ENCODE measurements at regions of chr19 and their contacts with region 1.

Region 1: DNA sequence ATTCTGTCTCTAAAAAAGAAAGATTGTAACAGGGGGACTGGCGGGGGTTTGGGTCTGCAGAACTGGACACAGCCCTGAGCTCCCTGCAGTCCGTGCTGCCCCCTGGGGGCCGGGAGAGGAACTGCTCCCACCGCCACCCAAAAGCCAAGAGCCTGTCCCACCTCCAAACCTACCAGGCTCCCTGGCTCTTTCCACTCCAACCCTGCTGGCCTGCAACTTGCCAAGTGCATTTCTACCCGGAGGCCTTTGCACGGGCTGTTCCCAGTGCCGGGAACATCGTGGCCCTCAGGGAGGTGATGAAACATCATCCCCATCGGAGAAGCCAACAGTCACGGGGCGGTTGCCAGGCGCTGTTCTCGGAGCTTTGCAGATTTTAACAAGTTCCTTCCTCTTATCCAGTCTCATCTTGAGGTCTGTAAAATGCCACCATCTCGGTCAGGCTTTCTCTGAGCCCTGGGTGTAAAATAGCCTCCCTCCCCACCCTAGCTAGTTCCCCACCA is 50.7 kb downstream of the SMIM24 start:
- DNase-seq: peak; percentile 74
- H3K4me3 ChIP-seq: no peak overlapping the region
- H3K27ac ChIP-seq: no peak overlapping the region
- H3K4me1 ChIP-seq: peaks cover 24% of the 10 kb centered on the region
- H3K27me3 ChIP-seq: no peaks in the 10 kb centered on the region
- CTCF ChIP-seq: peak; percentile 93 to 98
- POLR2A ChIP-seq: no peak

Region 2: GRCh38 chr19:3304871-3305423 is 124.7 kb before region 1 on chr19:
- CTCF ChIA-PET with region 1: interaction called, 20 read pairs
- POLR2A ChIA-PET with region 1: no interaction called
- dilution Hi-C with region 1: no loop called
- intact Hi-C with region 1: no loop called
- DNase-seq: peak; percentile 71
- H3K4me3 ChIP-seq: no peak overlapping the region
- H3K27ac ChIP-seq: no peak overlapping the region
- H3K4me1 ChIP-seq: no peaks in the 10 kb centered on the region
- H3K27me3 ChIP-seq: no peaks in the 10 kb centered on the region
- CTCF ChIP-seq: peak; percentile 66 to 77
- POLR2A ChIP-seq: no peak

Region 3: DNA sequence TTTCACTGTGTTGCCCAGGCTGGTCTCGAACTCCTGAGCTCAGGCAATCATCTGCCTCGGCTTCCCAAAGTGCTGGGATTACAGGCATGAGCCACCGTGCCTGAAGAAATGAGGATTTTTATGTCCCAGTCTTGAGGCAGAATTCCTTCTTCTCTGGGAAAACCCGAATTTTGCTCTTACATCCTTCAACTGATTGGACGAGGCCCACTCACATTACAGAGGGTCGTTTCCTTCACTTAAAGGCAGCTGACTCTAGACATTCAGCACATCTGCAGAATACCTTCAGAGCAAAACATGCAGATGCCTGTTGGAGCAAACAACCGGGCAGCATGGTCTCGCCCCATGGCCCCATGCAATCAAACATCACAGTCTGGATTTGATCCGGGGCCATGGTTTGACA is 99.6 kb before region 1 on chr19:
- CTCF ChIA-PET with region 1: interaction called, 32 read pairs
- POLR2A ChIA-PET with region 1: no interaction called
- dilution Hi-C with region 1: no loop called
- intact Hi-C with region 1: loop called (anchors 1 kb)
- DNase-seq: no peak
- H3K4me3 ChIP-seq: no peak overlapping the region
- H3K27ac ChIP-seq: no peak overlapping the region
- H3K4me1 ChIP-seq: no peaks in the 10 kb centered on the region
- H3K27me3 ChIP-seq: no peaks in the 10 kb centered on the region
- CTCF ChIP-seq: no peak
- POLR2A ChIP-seq: no peak

Region 4: GRCh38 chr19:3343619-3344502 is 85.8 kb before region 1 on chr19:
- CTCF ChIA-PET with region 1: interaction called, 32 read pairs
- POLR2A ChIA-PET with region 1: no interaction called
- dilution Hi-C with region 1: no loop called
- intact Hi-C with region 1: no loop called
- DNase-seq: peak; percentile 31
- H3K4me3 ChIP-seq: no peak overlapping the region
- H3K27ac ChIP-seq: no peak overlapping the region
- H3K4me1 ChIP-seq: no peaks in the 10 kb centered on the region
- H3K27me3 ChIP-seq: no peaks in the 10 kb centered on the region
- CTCF ChIP-seq: no peak
- POLR2A ChIP-seq: no peak

Region 5: GRCh38 chr19:3365836-3366752 is 63.5 kb before region 1 on chr19 and contains the start of gene NFIC:
- CTCF ChIA-PET with region 1: interaction called, 10 read pairs
- POLR2A ChIA-PET with region 1: no interaction called
- dilution Hi-C with region 1: no loop called
- intact Hi-C with region 1: loop called (anchors 2 kb)
- DNase-seq: peak; percentile 67
- H3K4me3 ChIP-seq: peak within 1 kb of the TSS; percentile 57 to 97 (median 75)
- H3K27ac ChIP-seq: peak within 1 kb of the TSS; percentile 60
- H3K4me1 ChIP-seq: peaks cover 26% of the 10 kb centered on the region
- H3K27me3 ChIP-seq: no peaks in the 10 kb centered on the region
- CTCF ChIP-seq: no peak
- POLR2A ChIP-seq: no peak
- total RNA-seq, gene NFIC: 131 and 133 TPM in 2 replicates

Region 6: DNA sequence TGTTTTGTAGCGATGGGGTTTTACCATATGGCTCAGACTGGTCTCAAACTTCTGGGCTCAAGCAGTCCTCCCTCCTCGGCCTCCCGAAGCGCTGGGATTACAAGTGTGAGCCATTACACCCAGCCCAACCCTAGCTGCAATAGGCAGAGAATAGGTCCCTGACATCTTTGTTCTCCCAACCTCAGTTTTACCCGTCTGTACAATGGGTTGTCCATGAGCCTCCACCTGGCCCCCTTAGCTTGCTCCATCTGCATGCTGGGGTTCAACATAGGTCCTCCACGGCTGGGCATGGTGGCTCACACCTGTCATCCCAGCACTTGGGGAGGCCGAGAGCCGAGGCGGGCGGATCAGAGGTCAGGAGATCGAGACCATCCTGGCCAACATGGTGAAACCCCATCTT is 48.8 kb before region 1 on chr19:
- CTCF ChIA-PET with region 1: interaction called, 34 read pairs
- POLR2A ChIA-PET with region 1: interaction called, 5 read pairs
- dilution Hi-C with region 1: no loop called
- intact Hi-C with region 1: no loop called
- DNase-seq: no peak
- H3K4me3 ChIP-seq: no peak overlapping the region
- H3K27ac ChIP-seq: no peak overlapping the region
- H3K4me1 ChIP-seq: peaks cover 3% of the 10 kb centered on the region
- H3K27me3 ChIP-seq: no peaks in the 10 kb centered on the region
- CTCF ChIP-seq: no peak
- POLR2A ChIP-seq: no peak

Region 7: GRCh38 chr19:3450796-3451411 is 21.3 kb after region 1 on chr19:
- CTCF ChIA-PET with region 1: interaction called, 5 read pairs
- POLR2A ChIA-PET with region 1: no interaction called
- dilution Hi-C with region 1: no loop called
- intact Hi-C with region 1: loop called (anchors 1 kb)
- DNase-seq: peak; percentile 99
- H3K4me3 ChIP-seq: no peak overlapping the region
- H3K27ac ChIP-seq: peak overlapping the region; percentile 94
- H3K4me1 ChIP-seq: peaks cover 11% of the 10 kb centered on the region
- H3K27me3 ChIP-seq: no peaks in the 10 kb centered on the region
- CTCF ChIP-seq: no peak
- POLR2A ChIP-seq: no peak

Region 8: GRCh38 chr19:3606690-3607289 is 177.2 kb after region 1 on chr19 and contains the start of gene TBXA2R:
- CTCF ChIA-PET with region 1: no interaction called
- POLR2A ChIA-PET with region 1: no interaction called
- dilution Hi-C with region 1: no loop called
- intact Hi-C with region 1: no loop called
- DNase-seq: peak; percentile 69
- H3K4me3 ChIP-seq: peak within 1 kb of the TSS; percentile 39 to 48 (median 39)
- H3K27ac ChIP-seq: peak within 1 kb of the TSS; percentile 34
- H3K4me1 ChIP-seq: peaks cover 23% of the 10 kb centered on the region
- H3K27me3 ChIP-seq: no peaks in the 10 kb centered on the region
- CTCF ChIP-seq: no peak
- POLR2A ChIP-seq: peak; percentile 17
- total RNA-seq, gene TBXA2R: 2.9 and 3.4 TPM in 2 replicates

Measured in endothelial cell of umbilical vein (primary cell).